ENCODE measurements at regions of chr12 and their contacts with region 1.

Region 1: GRCh38 chr12:50314629-50315312 is 31.5 kb upstream of the LIMA1 start:
- DNase-seq: no peak
- ATAC-seq: no peak
- H3K4me3 Mint-ChIP-seq: no peak overlapping the region
- H3K27ac Mint-ChIP-seq: no peak overlapping the region
- H3K4me1 Mint-ChIP-seq: peaks cover 7% of the 10 kb centered on the region
- H3K27me3 Mint-ChIP-seq: no peaks in the 10 kb centered on the region

Region 2: DNA sequence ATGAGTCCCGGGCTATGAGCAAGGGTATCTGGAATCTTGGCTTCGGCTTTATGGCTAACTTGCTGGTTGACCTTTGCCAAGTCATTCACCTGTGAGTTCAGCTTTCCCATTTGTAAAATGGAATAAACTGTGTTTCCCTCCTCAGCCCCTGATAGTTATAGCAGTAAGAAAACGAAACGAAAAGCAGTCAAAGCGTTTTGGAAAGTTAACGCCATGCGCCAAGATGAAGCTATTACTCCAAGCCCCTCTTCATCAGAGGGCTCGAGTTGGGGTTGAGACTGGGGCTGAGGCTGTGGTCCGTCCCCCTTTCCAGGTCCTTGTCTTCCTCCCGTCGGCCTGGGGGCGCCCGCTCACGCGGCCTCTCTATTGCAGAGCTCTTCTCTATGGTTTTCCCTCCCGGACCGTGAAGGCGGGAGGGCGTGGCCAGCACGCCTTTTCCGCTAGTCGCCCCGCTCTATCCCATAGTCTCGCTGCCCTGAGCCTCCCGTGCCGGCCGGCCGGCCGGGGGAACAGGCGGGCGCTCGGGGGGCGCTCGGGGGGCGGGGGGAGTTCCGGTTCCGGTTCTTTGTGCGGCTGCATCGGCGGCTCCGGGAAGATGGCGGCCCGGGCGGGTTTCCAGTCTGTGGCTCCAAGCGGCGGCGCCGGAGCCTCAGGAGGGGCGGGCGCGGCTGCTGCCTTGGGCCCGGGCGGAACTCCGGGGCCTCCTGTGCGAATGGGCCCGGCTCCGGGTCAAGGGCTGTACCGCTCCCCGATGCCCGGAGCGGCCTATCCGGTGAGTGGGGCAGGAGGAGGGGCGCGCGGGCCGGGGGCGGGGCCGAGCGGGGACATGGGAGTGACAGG is 229.8 kb before region 1 on chr12 and contains the start of gene SMARCD1:
- CTCF ChIA-PET with region 1: interaction called, 4 read pairs
- POLR2A ChIA-PET with region 1: no interaction called
- intact Hi-C with region 1: loop called (anchors 2 to 10 kb)
- DNase-seq: peak; percentile 91
- ATAC-seq: peak; percentile 90
- H3K4me3 Mint-ChIP-seq: peak within 1 kb of the TSS; percentile 85
- H3K27ac Mint-ChIP-seq: peak within 1 kb of the TSS; percentile 96
- H3K4me1 Mint-ChIP-seq: peaks cover 36% of the 10 kb centered on the region
- H3K27me3 Mint-ChIP-seq: no peaks in the 10 kb centered on the region
- total RNA-seq, gene SMARCD1: 51.8 to 76.6 TPM

Region 3: GRCh38 chr12:50132505-50133135 is 182.2 kb before region 1 on chr12:
- CTCF ChIA-PET with region 1: interaction called, 4 read pairs
- POLR2A ChIA-PET with region 1: no interaction called
- intact Hi-C with region 1: loop called (anchors 1 to 2 kb)
- DNase-seq: no peak
- ATAC-seq: peak; percentile 71
- H3K4me3 Mint-ChIP-seq: no peak overlapping the region
- H3K27ac Mint-ChIP-seq: peak overlapping the region; percentile 74
- H3K4me1 Mint-ChIP-seq: peaks cover 6% of the 10 kb centered on the region
- H3K27me3 Mint-ChIP-seq: no peaks in the 10 kb centered on the region

Region 4: DNA sequence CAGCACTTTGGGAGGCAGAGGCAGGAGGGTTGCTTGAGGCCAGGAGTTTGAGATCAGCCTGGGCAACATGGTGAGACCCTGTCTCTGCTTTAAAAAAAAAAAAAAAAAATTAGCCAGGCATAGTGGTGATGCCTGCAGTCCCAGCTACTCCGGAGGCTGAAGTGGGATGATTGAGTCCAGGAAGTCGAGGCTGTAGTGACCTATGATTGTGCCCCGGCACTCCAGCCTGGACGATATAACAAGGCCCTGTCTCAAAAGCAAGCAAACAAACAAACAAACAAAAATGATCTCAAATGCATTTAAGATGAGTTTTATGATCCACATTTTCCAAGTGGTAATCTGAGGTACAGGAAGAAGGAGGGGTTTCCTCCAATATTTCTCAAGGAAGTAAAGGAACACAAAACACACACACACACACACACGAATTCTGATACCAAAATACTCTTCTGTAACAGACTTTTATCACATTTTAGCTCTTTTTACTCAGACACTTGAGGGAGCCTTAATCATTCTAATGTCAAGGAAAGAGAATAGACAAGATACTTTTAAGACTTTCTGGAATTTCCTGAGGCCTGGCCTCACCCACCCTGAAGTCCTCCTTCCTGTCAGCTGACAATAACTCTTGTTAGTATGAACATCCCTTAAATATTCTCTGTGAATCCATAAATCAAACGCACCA is 103.2 kb before region 1 on chr12:
- CTCF ChIA-PET with region 1: interaction called, 8 read pairs
- POLR2A ChIA-PET with region 1: no interaction called
- intact Hi-C with region 1: loop called in 1 of 2 experiments (anchors 1 kb)
- DNase-seq: no peak
- ATAC-seq: peak; percentile 45
- H3K4me3 Mint-ChIP-seq: peak overlapping the region; percentile 12
- H3K27ac Mint-ChIP-seq: peak overlapping the region; percentile 96
- H3K4me1 Mint-ChIP-seq: peaks cover 46% of the 10 kb centered on the region
- H3K27me3 Mint-ChIP-seq: no peaks in the 10 kb centered on the region

Region 5: GRCh38 chr12:51590347-51591019 is 1275.7 kb after region 1 on chr12:
- CTCF ChIA-PET with region 1: no interaction called
- POLR2A ChIA-PET with region 1: no interaction called
- intact Hi-C with region 1: no loop called
- DNase-seq: peak; percentile 88
- ATAC-seq: peak; percentile 89
- H3K4me3 Mint-ChIP-seq: peak overlapping the region; percentile 76
- H3K27ac Mint-ChIP-seq: peak overlapping the region; percentile 63
- H3K4me1 Mint-ChIP-seq: peaks cover 16% of the 10 kb centered on the region
- H3K27me3 Mint-ChIP-seq: peaks cover 47% of the 10 kb centered on the region

Measured in activated CD4-positive, alpha-beta T cell treated with anti-CD3 and anti-CD28 coated beads for 36 hours (primary cell).